Endothelial cell of umbilical vein (primary cell): ENCODE measurements at regions of chr6 and their contacts with region 1.

Region 1: DNA sequence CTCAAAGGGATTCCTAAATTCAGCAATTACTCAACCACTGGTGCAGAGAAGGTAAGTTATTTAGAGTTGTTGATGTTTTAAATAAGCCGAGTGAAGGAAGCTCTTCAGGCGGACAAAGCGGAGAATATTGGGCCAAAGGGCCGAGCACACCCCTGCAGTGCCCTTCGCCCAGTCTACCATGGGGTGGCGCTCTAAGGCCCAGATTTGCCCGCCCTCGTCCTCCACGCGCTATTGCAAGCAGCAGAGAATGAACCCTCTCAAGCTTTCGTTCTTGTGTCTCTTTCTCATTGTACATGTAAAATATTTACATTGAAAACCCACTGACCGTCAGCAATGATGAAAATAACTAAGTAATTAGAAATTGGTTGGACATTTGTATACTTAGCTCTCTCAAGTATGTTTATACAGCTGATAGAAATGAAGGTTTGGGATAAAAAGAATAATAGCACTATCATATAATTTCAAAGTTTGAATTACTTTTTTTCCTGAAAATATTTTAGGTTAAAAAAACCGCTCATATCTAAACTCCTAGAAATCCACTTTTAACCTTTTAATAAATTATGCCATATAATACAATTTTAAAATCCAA is 195.0 kb upstream of the CEP162 start:
- DNase-seq: peak; percentile 77
- H3K4me3 ChIP-seq: no peak overlapping the region
- H3K27ac ChIP-seq: no peak overlapping the region
- H3K4me1 ChIP-seq: no peaks in the 10 kb centered on the region
- H3K27me3 ChIP-seq: no peaks in the 10 kb centered on the region
- CTCF ChIP-seq: peak; percentile 93 to 95
- POLR2A ChIP-seq: no peak

Region 2: DNA sequence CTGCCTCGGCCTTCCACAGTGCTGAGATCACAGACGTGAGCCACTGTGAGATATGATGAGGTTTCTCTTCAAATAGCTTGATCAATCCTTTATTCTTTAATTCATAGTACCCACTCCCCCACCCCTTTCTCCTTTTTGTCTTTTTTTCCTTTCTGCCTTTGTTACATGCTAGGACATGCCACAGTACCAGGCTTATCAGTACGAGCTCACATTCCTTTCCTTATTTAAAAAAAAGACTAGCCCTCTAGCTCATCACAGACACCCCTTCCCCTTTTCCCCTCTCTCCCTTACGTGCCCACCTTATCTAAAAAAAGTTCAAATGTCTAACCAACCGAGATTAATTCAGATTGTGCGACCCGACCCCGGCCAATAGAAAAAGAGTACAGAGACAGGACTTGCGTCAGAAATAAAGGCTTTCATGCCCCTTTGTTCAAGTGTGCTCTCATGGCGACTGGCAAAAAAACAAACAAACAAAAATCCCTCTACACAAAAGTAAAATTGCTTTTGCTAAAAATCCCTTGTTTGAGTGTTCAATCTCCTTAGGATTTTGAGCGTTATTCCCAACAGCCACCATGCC is 339.7 kb before region 1 on chr6:
- CTCF ChIA-PET with region 1: no interaction called
- POLR2A ChIA-PET with region 1: no interaction called
- dilution Hi-C with region 1: no loop called
- intact Hi-C with region 1: no loop called
- DNase-seq: no peak
- H3K4me3 ChIP-seq: no peak overlapping the region
- H3K27ac ChIP-seq: no peak overlapping the region
- H3K4me1 ChIP-seq: no peaks in the 10 kb centered on the region
- H3K27me3 ChIP-seq: no peaks in the 10 kb centered on the region
- CTCF ChIP-seq: no peak
- POLR2A ChIP-seq: no peak

Region 3: DNA sequence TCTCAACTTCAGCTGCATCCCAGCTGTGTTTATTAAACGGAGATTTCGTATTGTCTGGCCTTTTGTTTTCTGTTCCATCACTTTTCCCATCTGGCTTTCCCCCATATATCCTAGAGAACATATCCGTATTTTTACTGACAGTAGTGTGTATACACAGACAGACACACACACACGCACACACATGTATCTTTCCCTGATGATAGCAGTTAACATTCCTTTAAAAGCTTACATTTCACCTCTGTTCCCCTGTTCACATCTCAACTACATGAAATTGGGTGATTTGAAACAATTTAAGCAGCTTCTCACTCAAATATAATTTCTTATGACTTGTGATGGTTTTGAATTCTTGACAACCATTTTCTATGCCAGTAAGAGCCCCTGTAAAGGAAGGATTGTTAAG is 12.1 kb after region 1 on chr6:
- CTCF ChIA-PET with region 1: interaction called, 14 read pairs
- POLR2A ChIA-PET with region 1: no interaction called
- dilution Hi-C with region 1: no loop called
- intact Hi-C with region 1: no loop called
- DNase-seq: no peak
- H3K4me3 ChIP-seq: no peak overlapping the region
- H3K27ac ChIP-seq: no peak overlapping the region
- H3K4me1 ChIP-seq: no peaks in the 10 kb centered on the region
- H3K27me3 ChIP-seq: no peaks in the 10 kb centered on the region
- CTCF ChIP-seq: no peak
- POLR2A ChIP-seq: no peak

Region 4: GRCh38 chr6:84568971-84569370 is 146.5 kb after region 1 on chr6:
- CTCF ChIA-PET with region 1: interaction called, 46 read pairs
- POLR2A ChIA-PET with region 1: no interaction called
- dilution Hi-C with region 1: no loop called
- intact Hi-C with region 1: no loop called
- DNase-seq: peak; percentile 64
- H3K4me3 ChIP-seq: no peak overlapping the region
- H3K27ac ChIP-seq: no peak overlapping the region
- H3K4me1 ChIP-seq: no peaks in the 10 kb centered on the region
- H3K27me3 ChIP-seq: no peaks in the 10 kb centered on the region
- CTCF ChIP-seq: peak in 1 of 2 donors; percentile 30
- POLR2A ChIP-seq: no peak

Region 5: GRCh38 chr6:84657486-84657885 is 235.0 kb after region 1 on chr6:
- CTCF ChIA-PET with region 1: no interaction called
- POLR2A ChIA-PET with region 1: no interaction called
- dilution Hi-C with region 1: no loop called
- intact Hi-C with region 1: no loop called
- DNase-seq: no peak
- H3K4me3 ChIP-seq: no peak overlapping the region
- H3K27ac ChIP-seq: no peak overlapping the region
- H3K4me1 ChIP-seq: peaks cover 16% of the 10 kb centered on the region
- H3K27me3 ChIP-seq: no peaks in the 10 kb centered on the region
- CTCF ChIP-seq: no peak
- POLR2A ChIP-seq: no peak

Region 6: GRCh38 chr6:84758486-84758885 is 336.0 kb after region 1 on chr6:
- CTCF ChIA-PET with region 1: interaction called, 74 read pairs
- POLR2A ChIA-PET with region 1: interaction called, 3 read pairs
- dilution Hi-C with region 1: no loop called
- intact Hi-C with region 1: loop called (anchors 1 kb)
- DNase-seq: no peak
- H3K4me3 ChIP-seq: no peak overlapping the region
- H3K27ac ChIP-seq: no peak overlapping the region
- H3K4me1 ChIP-seq: peaks cover 35% of the 10 kb centered on the region
- H3K27me3 ChIP-seq: no peaks in the 10 kb centered on the region
- CTCF ChIP-seq: no peak
- POLR2A ChIP-seq: no peak

Region 7: DNA sequence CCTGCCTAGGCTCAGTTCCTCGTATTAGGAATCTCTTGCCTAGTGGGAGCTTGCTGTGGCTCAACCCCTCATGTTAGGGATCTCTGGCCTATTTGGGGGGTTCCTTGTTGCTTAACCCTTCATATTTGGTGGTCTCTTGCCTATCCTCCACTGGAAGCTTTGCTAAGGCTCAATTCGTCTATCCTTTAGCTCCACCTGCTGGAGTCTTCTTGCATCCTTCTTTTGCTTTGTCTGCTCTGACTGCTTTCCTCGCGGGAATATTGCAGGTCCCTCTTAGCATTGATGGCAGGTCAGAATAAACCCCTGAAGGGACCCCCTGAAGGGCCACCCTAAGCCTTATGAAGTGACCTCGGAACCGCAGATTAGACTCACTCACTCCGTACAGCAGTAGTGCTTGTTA is 544.9 kb after region 1 on chr6:
- CTCF ChIA-PET with region 1: interaction called, 42 read pairs
- POLR2A ChIA-PET with region 1: no interaction called
- dilution Hi-C with region 1: no loop called
- intact Hi-C with region 1: loop called (anchors 1 kb)
- DNase-seq: peak; percentile 75
- H3K4me3 ChIP-seq: no peak overlapping the region
- H3K27ac ChIP-seq: no peak overlapping the region
- H3K4me1 ChIP-seq: no peaks in the 10 kb centered on the region
- H3K27me3 ChIP-seq: no peaks in the 10 kb centered on the region
- CTCF ChIP-seq: peak; percentile 52 to 62
- POLR2A ChIP-seq: no peak

Region 8: DNA sequence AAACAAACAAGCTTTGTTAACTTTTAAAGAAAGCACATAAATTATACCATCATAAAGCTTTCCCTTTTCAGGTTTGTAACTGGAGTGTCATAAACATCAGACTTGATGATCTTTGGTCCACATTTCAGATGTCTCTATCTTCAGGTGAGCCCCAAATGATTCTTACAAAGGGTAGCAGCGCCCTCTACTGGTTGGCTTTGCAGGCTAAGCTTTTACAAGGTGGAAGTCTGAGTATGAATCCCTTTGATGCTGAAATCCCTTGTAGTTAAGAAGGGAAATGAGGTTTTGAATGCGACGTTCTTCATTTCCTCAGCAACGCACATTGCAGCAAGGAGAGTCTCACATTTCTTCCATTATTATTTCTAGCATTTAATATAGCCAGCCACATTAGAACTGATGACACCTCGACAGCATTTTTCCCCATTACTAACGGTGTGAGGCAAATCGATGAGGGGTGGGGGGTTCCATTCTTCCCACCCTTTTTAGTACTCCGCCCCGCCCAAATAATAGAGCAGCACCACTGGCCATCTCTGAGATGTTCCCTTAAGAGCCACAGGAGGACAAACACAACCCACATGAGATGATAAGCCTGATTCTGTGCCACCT is 901.1 kb after region 1 on chr6:
- CTCF ChIA-PET with region 1: interaction called, 17 read pairs
- POLR2A ChIA-PET with region 1: no interaction called
- dilution Hi-C with region 1: no loop called
- intact Hi-C with region 1: no loop called
- DNase-seq: peak; percentile 80
- H3K4me3 ChIP-seq: no peak overlapping the region
- H3K27ac ChIP-seq: no peak overlapping the region
- H3K4me1 ChIP-seq: no peaks in the 10 kb centered on the region
- H3K27me3 ChIP-seq: peaks cover 3 to 4% of the 10 kb centered on the region in 2 experiments
- CTCF ChIP-seq: peak; percentile 74 to 83
- POLR2A ChIP-seq: no peak